K562 (cell line): ENCODE measurements at regions of chr12 and their contacts with region 1.

Region 1: DNA sequence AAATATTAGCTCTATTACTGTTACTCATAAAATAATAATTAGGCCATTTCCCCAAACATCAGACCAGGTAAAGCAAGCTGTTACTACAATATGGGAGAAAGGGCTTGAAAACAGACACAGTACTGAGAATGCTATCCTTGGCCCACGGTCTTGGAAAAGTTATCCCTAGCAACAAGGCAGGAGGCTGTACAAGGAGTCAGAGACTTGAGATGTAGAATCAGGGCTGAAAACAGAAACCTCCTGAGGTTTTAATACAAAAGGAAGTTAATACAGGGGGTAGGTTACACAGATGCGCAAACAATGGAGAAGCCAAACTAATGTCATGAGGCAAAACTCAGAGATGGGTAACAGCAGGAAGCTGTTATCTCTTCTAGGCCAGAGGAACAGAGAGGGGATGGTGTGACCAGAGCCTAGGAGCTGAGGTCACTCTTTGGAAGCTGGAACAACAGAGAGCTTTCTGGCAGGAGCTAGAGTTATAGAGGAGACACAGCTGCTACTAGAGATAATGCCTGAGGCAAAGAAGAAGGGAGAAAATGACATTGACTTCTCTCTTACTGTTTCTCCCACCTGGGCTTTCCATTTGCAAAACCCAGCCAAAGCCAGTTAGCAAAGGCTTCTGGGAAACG is 248.8 kb downstream of the SUDS3 start:
- DNase-seq: peak; percentile 11 to 70 (median 32)
- ATAC-seq: peak; percentile 92
- H3K4me3 ChIP-seq: no peak overlapping the region
- H3K27ac ChIP-seq: peak overlapping the region; percentile 34; the same call in 2 of the 3 replicates
- H3K4me1 ChIP-seq: peaks cover 0 to 8% of the 10 kb centered on the region in 2 experiments; a peak in 3 of 5 replicates
- H3K27me3 ChIP-seq: no peaks in the 10 kb centered on the region
- CTCF ChIP-seq: no peak
- EP300 ChIP-seq: peak; percentile 21; the same call in 1 of the 2 replicates
- POLR2A ChIP-seq: no peak
- RAD21 ChIP-seq: no peak

Region 2: DNA sequence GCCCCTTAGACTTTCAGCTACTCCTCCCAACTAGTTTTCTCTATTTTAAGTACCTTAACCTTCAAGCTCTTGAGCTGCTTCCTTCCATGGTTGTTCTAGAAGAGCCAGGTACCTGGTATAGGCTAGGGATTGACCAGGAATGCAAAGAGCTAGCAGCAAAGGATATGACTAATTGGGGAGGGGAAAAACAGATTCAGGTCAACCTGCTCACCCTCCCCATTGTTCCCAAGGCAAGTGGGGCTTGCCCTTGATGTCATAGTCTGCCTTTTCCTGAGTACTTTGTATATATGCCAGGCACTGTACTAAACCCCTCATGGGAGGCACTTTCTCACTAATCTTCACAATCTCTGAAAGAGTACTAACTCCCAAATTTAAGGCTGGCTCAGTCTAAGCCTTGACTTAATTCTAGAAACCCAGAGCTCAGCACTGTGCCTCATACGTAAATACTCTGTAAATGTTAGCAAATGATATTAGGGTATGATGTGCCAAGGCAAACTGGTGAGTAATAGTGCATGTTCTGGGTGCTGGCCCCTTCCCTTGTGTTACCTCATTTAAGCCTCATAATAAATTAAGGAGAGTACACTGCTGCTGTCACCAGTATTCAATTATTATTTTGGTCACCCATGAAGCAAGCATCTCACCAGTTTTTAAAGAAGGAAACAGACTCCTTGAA is 206.6 kb before region 1 on chr12:
- CTCF ChIA-PET with region 1: no interaction called
- POLR2A ChIA-PET with region 1: no interaction called
- in situ Hi-C with region 1: loop called (anchors 10 kb)
- intact Hi-C with region 1: no loop called
- DNase-seq: no peak
- ATAC-seq: no peak
- H3K4me3 ChIP-seq: no peak overlapping the region
- H3K27ac ChIP-seq: no peak overlapping the region
- H3K4me1 ChIP-seq: no peaks in the 10 kb centered on the region
- H3K27me3 ChIP-seq: no peaks in the 10 kb centered on the region
- CTCF ChIP-seq: no peak
- EP300 ChIP-seq: no peak
- POLR2A ChIP-seq: no peak
- RAD21 ChIP-seq: no peak

Region 3: GRCh38 chr12:118590406-118591150 is 34.6 kb before region 1 on chr12:
- CTCF ChIA-PET with region 1: no interaction called
- POLR2A ChIA-PET with region 1: no interaction called
- in situ Hi-C with region 1: no loop called
- intact Hi-C with region 1: no loop called
- DNase-seq: no peak
- ATAC-seq: no peak
- H3K4me3 ChIP-seq: no peak overlapping the region
- H3K27ac ChIP-seq: no peak overlapping the region
- H3K4me1 ChIP-seq: no peaks in the 10 kb centered on the region
- H3K27me3 ChIP-seq: no peaks in the 10 kb centered on the region; a peak in 1 of 5 replicates
- CTCF ChIP-seq: no peak
- EP300 ChIP-seq: no peak
- POLR2A ChIP-seq: no peak
- RAD21 ChIP-seq: no peak